ENCODE measurements at regions of chr12 and their contacts with region 1.

Region 1: GRCh38 chr12:92987362-92987761 is 58.3 kb upstream of the EEA1 start:
- DNase-seq: no peak
- ATAC-seq: peak; percentile 54
- H3K4me3 ChIP-seq: peak overlapping the region; percentile 32; the same call in 1 of the 2 replicates
- H3K27ac ChIP-seq: peak overlapping the region; percentile 94
- H3K4me1 ChIP-seq: peaks cover 27% of the 10 kb centered on the region
- H3K27me3 ChIP-seq: no peaks in the 10 kb centered on the region
- CTCF ChIP-seq: peak; percentile 39 to 64 (median 52); a peak in 5 of 6 replicates
- EP300 ChIP-seq: peak in 1 of 2 experiments; percentile 32; a peak in 1 of 4 replicates
- POLR2A ChIP-seq: no peak
- RAD21 ChIP-seq: peak; percentile 84

Region 2: DNA sequence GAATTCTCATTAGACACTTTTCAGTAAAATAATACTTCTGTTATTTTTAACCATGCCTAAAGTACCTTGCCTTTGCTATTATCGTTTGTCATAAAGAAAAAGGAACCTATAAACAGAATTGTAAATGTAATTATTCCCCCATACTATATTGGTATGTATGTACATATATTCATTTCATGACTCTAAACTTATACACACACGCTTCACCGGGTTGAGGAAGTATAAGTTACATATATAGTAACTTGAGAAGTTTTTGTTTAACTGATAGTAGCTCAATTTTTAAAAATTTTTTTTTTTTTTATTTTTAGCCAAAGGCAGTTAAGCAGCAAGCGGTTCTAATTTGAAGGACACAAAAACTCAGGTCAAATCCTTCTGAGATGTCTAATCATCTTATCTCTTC is 177.0 kb before region 1 on chr12:
- CTCF ChIA-PET with region 1: interaction called, 3 read pairs
- POLR2A ChIA-PET with region 1: interaction called, 5 read pairs
- RAD21 ChIA-PET with region 1: interaction called, 7 read pairs
- SMC1A ChIA-PET with region 1: interaction called, 10 read pairs
- in situ Hi-C with region 1: no loop called
- intact Hi-C with region 1: no loop called
- DNase-seq: peak; percentile 13
- ATAC-seq: peak; percentile 89
- H3K4me3 ChIP-seq: no peak overlapping the region
- H3K27ac ChIP-seq: peak overlapping the region; percentile 77
- H3K4me1 ChIP-seq: peaks cover 8% of the 10 kb centered on the region; the same call in 1 of the 2 replicates
- H3K27me3 ChIP-seq: no peaks in the 10 kb centered on the region
- CTCF ChIP-seq: no peak
- EP300 ChIP-seq: 0 out of 4 replicates have a peak, but pooled peaks of 1 of the 2 experiments have one; percentile 16
- POLR2A ChIP-seq: no peak
- RAD21 ChIP-seq: no peak

Region 3: DNA sequence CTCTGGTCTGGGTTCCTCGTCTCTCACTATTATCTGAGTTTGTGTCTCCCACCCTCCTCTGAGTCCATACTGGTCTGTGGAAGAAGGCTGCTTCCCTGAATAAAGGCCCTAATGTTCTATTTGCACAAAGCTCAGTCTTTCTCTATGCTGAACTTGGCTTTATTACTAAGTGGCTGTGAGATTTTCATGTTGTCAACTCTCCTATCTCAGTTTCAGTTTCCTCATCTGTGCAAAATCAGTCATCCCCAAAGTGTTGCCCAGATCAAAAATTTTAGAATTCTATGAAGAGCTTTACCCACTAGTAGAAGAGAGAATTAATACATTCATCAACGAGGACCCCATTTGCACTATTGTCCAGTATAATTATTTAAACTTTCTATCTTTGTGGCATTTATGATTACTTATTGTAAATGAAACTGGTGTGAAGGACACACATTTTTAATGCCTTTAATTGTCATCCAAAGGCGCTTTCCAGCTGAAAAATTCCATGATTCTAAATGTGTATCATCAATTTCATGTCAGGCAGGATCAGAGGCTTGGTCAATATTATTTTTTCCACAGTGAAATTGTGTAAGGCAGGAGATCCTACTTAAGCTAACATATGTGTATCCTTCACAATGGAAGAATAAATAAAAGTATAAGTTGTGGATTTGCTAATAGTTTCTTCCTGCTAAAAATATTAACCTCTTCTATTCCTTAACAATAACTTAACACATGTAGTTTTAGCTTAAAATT is 20.8 kb after region 1 on chr12:
- CTCF ChIA-PET with region 1: interaction called, 68 read pairs
- POLR2A ChIA-PET with region 1: interaction called, 39 read pairs
- RAD21 ChIA-PET with region 1: interaction called, 92 read pairs
- SMC1A ChIA-PET with region 1: interaction called, 420 read pairs
- in situ Hi-C with region 1: no loop called
- intact Hi-C with region 1: no loop called
- DNase-seq: no peak
- ATAC-seq: peak; percentile 92
- H3K4me3 ChIP-seq: no peak overlapping the region
- H3K27ac ChIP-seq: peak overlapping the region; percentile 45
- H3K4me1 ChIP-seq: peaks cover 36% of the 10 kb centered on the region
- H3K27me3 ChIP-seq: no peaks in the 10 kb centered on the region
- CTCF ChIP-seq: no peak
- EP300 ChIP-seq: no peak
- POLR2A ChIP-seq: no peak
- RAD21 ChIP-seq: no peak

Region 4: GRCh38 chr12:93098077-93098476 is 110.7 kb after region 1 on chr12:
- CTCF ChIA-PET with region 1: interaction called, 34 read pairs
- POLR2A ChIA-PET with region 1: interaction called, 3 read pairs
- RAD21 ChIA-PET with region 1: interaction called, 66 read pairs
- SMC1A ChIA-PET with region 1: interaction called, 42 read pairs
- in situ Hi-C with region 1: no loop called
- intact Hi-C with region 1: loop called (anchors 2 kb)
- DNase-seq: peak; percentile 51
- ATAC-seq: peak; percentile 80
- H3K4me3 ChIP-seq: no peak overlapping the region
- H3K27ac ChIP-seq: no peak overlapping the region
- H3K4me1 ChIP-seq: peaks cover 20% of the 10 kb centered on the region
- H3K27me3 ChIP-seq: no peaks in the 10 kb centered on the region
- CTCF ChIP-seq: peak; percentile 36 to 54 (median 52)
- EP300 ChIP-seq: no peak
- POLR2A ChIP-seq: no peak
- RAD21 ChIP-seq: peak; percentile 80

Region 5: DNA sequence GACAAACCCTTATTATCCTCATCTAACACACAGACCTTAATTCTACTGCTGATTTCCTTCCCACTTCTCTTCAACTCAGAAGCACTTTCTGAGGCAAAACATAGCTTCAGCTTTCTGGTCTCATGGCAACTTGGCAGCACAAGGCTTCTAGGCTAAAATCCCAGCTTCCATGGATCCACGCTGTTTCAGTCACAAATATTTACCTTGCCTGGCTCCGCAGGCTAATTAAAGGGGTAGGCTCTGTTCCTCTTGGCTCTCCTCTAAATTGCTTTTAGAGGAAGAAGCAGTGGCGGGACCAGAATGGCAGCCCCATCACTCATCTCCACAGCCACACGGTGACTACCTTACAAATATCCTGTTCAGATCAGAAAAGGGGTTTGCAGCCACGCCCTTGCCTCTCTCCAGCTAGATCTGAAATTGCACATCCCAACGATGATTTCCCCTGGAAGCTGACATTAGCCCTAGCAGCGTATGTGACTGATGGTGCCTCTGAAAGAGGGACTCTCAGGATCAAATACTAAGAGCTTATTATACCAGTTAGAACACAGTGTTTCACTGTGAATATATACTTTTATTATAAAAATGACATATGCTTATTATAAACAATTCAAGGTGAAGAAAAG is 168.8 kb after region 1 on chr12:
- CTCF ChIA-PET with region 1: no interaction called
- POLR2A ChIA-PET with region 1: no interaction called
- RAD21 ChIA-PET with region 1: no interaction called
- SMC1A ChIA-PET with region 1: no interaction called
- in situ Hi-C with region 1: no loop called
- intact Hi-C with region 1: no loop called
- DNase-seq: no peak
- ATAC-seq: no peak
- H3K4me3 ChIP-seq: no peak overlapping the region
- H3K27ac ChIP-seq: no peak overlapping the region
- H3K4me1 ChIP-seq: no peaks in the 10 kb centered on the region
- H3K27me3 ChIP-seq: no peaks in the 10 kb centered on the region
- CTCF ChIP-seq: no peak
- EP300 ChIP-seq: no peak
- POLR2A ChIP-seq: no peak
- RAD21 ChIP-seq: no peak

Region 6: GRCh38 chr12:93243689-93244513 is 256.5 kb after region 1 on chr12:
- CTCF ChIA-PET with region 1: interaction called, 36 read pairs
- POLR2A ChIA-PET with region 1: interaction called, 4 read pairs
- RAD21 ChIA-PET with region 1: interaction called, 19 read pairs
- SMC1A ChIA-PET with region 1: interaction called, 25 read pairs
- in situ Hi-C with region 1: no loop called
- intact Hi-C with region 1: loop called (anchors 2 kb)
- DNase-seq: peak; percentile 75
- ATAC-seq: peak; percentile 52
- H3K4me3 ChIP-seq: peak overlapping the region; percentile 47
- H3K27ac ChIP-seq: peak overlapping the region; percentile 87
- H3K4me1 ChIP-seq: peaks cover 62% of the 10 kb centered on the region
- H3K27me3 ChIP-seq: no peaks in the 10 kb centered on the region
- CTCF ChIP-seq: no peak
- EP300 ChIP-seq: no peak
- POLR2A ChIP-seq: no peak
- RAD21 ChIP-seq: 0 out of 2 replicates have a peak, but pooled peaks have one; percentile 1

Region 7: DNA sequence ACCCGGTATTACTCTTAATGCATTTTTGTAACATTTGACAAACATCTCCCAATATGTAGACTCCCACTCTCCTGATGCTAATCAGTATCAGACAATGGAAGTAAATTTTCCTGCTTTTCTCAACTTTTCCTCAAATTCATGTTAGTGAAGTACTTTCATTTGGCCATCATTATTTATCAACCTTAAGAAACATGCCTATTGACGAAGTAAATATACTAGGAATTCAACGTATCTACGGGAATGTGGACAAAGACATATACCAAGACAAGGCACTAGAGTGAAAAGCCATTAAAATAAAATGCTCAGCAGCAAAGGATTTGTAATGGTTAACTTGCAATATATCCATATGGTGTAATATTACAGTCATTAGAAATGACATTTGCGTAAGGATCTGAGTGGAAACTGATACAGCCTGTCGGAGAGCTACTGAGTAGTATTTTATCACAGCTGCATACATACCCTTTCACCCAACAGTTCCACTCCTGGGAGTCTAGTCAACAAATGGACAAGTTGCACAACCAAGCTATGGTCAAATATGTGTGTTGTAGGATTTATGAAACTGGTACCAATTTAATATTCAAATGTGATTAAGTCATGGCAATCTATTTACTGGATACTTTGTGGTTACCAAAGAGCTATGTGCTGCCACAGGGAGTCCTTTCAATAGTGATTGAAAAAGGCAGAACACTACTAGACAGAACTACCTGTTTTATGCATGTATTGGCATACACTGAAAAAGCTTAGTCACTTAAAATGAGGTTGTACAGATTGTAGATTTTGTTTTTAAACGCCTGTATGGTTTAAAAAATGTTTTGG is 416.8 kb after region 1 on chr12:
- CTCF ChIA-PET with region 1: interaction called, 14 read pairs
- POLR2A ChIA-PET with region 1: no interaction called
- RAD21 ChIA-PET with region 1: interaction called, 7 read pairs
- SMC1A ChIA-PET with region 1: interaction called, 19 read pairs
- in situ Hi-C with region 1: no loop called
- intact Hi-C with region 1: no loop called
- DNase-seq: no peak
- ATAC-seq: peak; percentile 14; the same call in 1 of the 3 replicates
- H3K4me3 ChIP-seq: no peak overlapping the region
- H3K27ac ChIP-seq: no peak overlapping the region
- H3K4me1 ChIP-seq: no peaks in the 10 kb centered on the region
- H3K27me3 ChIP-seq: no peaks in the 10 kb centered on the region
- CTCF ChIP-seq: no peak
- EP300 ChIP-seq: no peak
- POLR2A ChIP-seq: peak; percentile 47; the same call in 1 of the 2 replicates
- RAD21 ChIP-seq: no peak

Region 8: DNA sequence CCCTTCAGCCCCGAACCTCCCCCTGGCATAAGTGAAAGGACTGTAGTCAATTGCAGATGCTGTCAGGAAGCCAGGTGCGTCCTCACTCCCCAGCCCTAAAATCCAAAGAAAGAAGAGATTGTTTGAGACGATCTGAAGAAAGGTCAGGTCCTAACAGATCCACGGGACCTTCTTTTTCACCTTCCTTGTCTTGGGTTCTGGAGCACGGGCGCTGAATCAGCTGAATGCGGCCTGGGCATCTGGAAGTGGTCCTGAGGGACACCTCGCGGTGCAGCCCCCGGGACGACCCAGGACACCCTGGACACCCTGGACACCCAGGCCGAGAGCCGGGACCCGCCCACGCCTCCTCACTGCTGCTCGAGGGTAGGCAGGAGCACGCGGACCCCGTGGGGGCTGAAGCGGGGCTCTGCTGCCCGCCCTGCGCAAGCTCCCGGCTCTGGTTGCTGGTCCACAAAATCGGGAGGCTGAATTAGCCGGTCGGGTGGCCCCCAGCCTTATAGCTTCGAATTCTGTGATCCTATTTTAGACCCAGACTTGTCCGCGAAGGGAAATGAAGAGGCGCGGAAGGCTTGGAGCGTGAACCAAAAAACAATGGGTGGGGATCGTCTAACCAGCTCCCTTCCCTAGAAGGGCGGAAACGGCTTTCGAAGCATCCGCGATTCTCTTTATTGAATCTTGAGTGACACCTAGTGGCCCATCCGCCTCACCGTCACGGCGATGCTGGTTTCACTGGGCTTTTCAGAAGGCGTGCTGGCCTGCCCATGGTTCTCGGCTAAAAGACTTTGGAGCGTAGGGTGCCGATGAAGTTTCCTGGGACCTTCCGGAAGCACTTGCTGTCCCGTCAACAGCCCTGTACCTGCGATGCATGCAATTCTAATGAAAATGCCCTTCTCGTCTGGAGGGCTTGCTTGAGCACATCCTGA is 1114.6 kb after region 1 on chr12:
- CTCF ChIA-PET with region 1: interaction called, 40 read pairs
- POLR2A ChIA-PET with region 1: no interaction called
- RAD21 ChIA-PET with region 1: interaction called, 36 read pairs
- SMC1A ChIA-PET with region 1: interaction called, 14 read pairs
- in situ Hi-C with region 1: loop called (anchors 5 kb)
- intact Hi-C with region 1: loop called (anchors 10 kb)
- DNase-seq: peak; percentile 56
- ATAC-seq: peak; percentile 93
- H3K4me3 ChIP-seq: peak overlapping the region; percentile 78
- H3K27ac ChIP-seq: no peak overlapping the region
- H3K4me1 ChIP-seq: no peaks in the 10 kb centered on the region; the same call in 1 of the 2 replicates
- H3K27me3 ChIP-seq: peaks cover 0 to 2% of the 10 kb centered on the region in 2 experiments; a peak in 2 of 4 replicates
- CTCF ChIP-seq: peak; percentile 79 to 97 (median 82); a peak in 5 of 6 replicates
- EP300 ChIP-seq: no peak
- POLR2A ChIP-seq: no peak
- RAD21 ChIP-seq: peak; percentile 93